Heart left ventricle (tissue), 16 donors: ENCODE measurements at regions of chr15 and their contacts with region 1.

Region 1: GRCh38 chr15:68586274-68586961 is 7.6 kb downstream of the CORO2B start:
- DNase-seq: peak in 1 of 5 donors; percentile 9
- ATAC-seq: peak in 2 of 4 donors; percentile 51 to 60
- H3K4me3 ChIP-seq: no peak overlapping the region
- H3K27ac ChIP-seq: peak overlapping the region in 4 of 12 donors; percentile 30 to 49 (median 44)
- H3K4me1 ChIP-seq: peaks cover 0 to 78% (median 27%) of the 10 kb centered on the region in 12 donors
- H3K27me3 ChIP-seq: no peaks in the 10 kb centered on the region
- CTCF ChIP-seq: no peak
- POLR2A ChIP-seq: no peak

Region 2: GRCh38 chr15:68620721-68621527 is 34.5 kb after region 1 on chr15:
- intact Hi-C with region 1: loop called in 2 of 10 experiments (anchors 5 kb)
- DNase-seq: peak; percentile 77 to 93 (median 88)
- ATAC-seq: peak; percentile 72 to 88 (median 85)
- H3K4me3 ChIP-seq: peak overlapping the region in 1 of 12 donors; percentile 6
- H3K27ac ChIP-seq: peak overlapping the region; percentile 27 to 77 (median 60)
- H3K4me1 ChIP-seq: peaks cover 0 to 58% (median 23%) of the 10 kb centered on the region in 12 donors
- H3K27me3 ChIP-seq: no peaks in the 10 kb centered on the region
- CTCF ChIP-seq: no peak
- POLR2A ChIP-seq: no peak

Region 3: GRCh38 chr15:68631601-68632051 is 45.2 kb after region 1 on chr15:
- intact Hi-C with region 1: loop called in 5 of 10 experiments (anchors 5 to 10 kb)
- DNase-seq: peak in 1 of 5 donors; percentile 63
- ATAC-seq: peak; percentile 23 to 59 (median 33)
- H3K4me3 ChIP-seq: no peak overlapping the region
- H3K27ac ChIP-seq: peak overlapping the region in 1 of 12 donors; percentile 24
- H3K4me1 ChIP-seq: peaks cover 0 to 77% (median 27%) of the 10 kb centered on the region in 12 donors
- H3K27me3 ChIP-seq: no peaks in the 10 kb centered on the region
- CTCF ChIP-seq: peak in 5 of 12 donors; percentile 7 to 39 (median 12)
- POLR2A ChIP-seq: no peak

Region 4: GRCh38 chr15:68637767-68638404 is 51.5 kb after region 1 on chr15:
- intact Hi-C with region 1: loop called in 5 of 10 experiments (anchors 5 to 10 kb)
- DNase-seq: peak; percentile 68 to 82 (median 80)
- ATAC-seq: peak; percentile 22 to 81 (median 76)
- H3K4me3 ChIP-seq: no peak overlapping the region
- H3K27ac ChIP-seq: peak overlapping the region in 11 of 12 donors; percentile 16 to 72 (median 51)
- H3K4me1 ChIP-seq: peaks cover 0 to 87% (median 52%) of the 10 kb centered on the region in 12 donors
- H3K27me3 ChIP-seq: no peaks in the 10 kb centered on the region
- CTCF ChIP-seq: no peak
- POLR2A ChIP-seq: no peak

Region 5: DNA sequence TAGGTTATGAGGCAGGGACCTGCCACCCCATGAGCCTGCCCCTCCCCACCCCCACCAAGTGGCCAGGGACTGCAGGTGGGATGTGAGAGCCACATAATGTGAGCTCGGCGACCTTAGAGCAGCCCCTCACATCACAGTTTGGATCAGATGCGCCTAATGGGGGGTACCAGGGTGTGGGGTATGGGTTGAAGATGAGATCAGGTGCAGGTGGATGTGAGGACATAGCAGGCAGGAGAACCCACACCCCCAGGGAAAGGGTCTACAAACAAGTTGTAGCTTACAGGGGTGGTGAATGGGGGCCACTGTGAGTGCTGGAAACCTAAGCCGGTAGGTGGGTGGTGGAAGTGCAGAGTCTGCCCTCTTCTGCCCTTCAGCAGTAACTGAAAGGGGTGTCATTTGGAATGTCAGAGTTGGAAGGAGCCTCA is 86.4 kb after region 1 on chr15:
- intact Hi-C with region 1: loop called in 1 of 10 experiments (anchors 5 kb)
- DNase-seq: no peak
- ATAC-seq: no peak
- H3K4me3 ChIP-seq: no peak overlapping the region
- H3K27ac ChIP-seq: no peak overlapping the region
- H3K4me1 ChIP-seq: peaks cover 0 to 34% (median 10%) of the 10 kb centered on the region in 12 donors
- H3K27me3 ChIP-seq: no peaks in the 10 kb centered on the region
- CTCF ChIP-seq: peak in 3 of 12 donors; percentile 19 to 32 (median 20)
- POLR2A ChIP-seq: no peak